Posterior cingulate gyrus (tissue), 11 donors: ENCODE measurements at regions of chr5 and their contacts with region 1.

Region 1: DNA sequence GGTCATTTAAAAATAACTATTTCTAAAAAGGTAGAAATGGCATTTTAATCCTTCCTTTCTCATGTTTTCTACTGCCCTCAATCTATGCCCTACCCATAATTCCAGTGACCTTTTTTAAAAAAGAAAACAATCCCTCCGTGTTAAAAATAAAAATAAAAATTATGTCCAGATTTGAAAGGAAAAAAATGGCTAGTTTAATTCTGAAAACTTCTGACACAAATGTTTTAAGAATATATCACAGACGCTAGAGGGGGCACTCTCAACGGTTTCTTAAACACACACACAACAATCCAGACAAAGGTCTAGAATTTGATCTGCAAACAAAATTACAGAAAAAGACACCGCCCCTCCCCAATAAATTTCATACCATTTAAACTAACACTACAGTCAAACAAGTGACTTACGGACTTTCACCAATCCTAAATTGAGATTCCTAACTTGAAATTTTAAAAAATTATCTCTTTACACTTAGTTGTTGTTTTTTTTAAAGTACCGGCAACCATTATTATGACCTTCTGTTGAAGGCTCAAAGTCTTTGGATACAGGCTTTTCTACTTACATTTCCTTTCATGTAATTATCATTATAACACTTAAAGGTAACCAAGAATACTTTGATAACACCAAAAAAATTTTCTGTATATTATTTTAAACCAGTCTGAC is 38.2 kb downstream of the CLINT1 start:
- DNase-seq: no peak

Region 2: DNA sequence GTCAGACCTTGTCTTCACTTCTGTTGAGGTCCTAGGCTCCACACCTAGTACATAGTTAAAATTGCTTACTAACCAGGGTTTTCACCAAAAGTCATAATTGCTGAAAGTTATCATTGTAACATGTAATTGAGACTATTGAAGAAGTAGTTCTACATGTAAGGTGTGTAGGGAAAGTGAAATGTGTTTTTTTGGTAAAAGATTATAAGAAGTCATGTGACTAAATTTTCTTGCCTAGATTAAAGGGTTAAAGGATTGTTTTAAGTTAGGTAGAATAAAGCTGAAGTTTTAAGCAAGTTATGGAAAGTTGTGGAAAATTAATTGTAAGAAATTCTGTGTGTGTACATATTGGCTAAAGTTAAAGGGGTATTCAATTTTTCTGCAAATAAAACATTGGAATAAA is 123.3 kb before region 1 on chr5:
- intact Hi-C with region 1: no loop called
- DNase-seq: no peak

Region 3: GRCh38 chr5:157761690-157762621 is 58.8 kb before region 1 on chr5:
- intact Hi-C with region 1: no loop called
- DNase-seq: no peak

Region 4: DNA sequence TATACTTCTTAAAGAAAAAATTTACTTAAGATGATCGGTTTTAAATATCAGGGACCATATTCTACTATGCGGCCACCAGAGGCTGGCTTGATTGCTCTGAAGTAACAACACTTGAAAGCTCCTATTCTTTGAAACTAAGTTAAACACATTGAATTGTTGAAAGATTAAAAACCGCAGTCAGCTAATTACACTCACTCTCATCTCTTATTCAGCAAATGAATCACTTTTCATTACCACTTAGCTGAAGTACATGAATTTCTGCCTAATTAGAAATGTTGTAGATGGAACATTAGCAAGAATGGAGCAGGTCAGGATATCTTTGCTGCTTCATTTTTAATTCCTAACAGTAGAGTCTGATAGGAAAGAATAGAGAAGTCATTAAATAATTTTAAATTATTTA is 34.9 kb before region 1 on chr5:
- intact Hi-C with region 1: no loop called
- DNase-seq: no peak

Region 5: GRCh38 chr5:157858527-157859226 is 38.0 kb after region 1 on chr5 and contains the start of gene CLINT1:
- intact Hi-C with region 1: loop called (anchors 5 kb)
- DNase-seq: peak; percentile 89 to 99 (median 93)

Region 6: DNA sequence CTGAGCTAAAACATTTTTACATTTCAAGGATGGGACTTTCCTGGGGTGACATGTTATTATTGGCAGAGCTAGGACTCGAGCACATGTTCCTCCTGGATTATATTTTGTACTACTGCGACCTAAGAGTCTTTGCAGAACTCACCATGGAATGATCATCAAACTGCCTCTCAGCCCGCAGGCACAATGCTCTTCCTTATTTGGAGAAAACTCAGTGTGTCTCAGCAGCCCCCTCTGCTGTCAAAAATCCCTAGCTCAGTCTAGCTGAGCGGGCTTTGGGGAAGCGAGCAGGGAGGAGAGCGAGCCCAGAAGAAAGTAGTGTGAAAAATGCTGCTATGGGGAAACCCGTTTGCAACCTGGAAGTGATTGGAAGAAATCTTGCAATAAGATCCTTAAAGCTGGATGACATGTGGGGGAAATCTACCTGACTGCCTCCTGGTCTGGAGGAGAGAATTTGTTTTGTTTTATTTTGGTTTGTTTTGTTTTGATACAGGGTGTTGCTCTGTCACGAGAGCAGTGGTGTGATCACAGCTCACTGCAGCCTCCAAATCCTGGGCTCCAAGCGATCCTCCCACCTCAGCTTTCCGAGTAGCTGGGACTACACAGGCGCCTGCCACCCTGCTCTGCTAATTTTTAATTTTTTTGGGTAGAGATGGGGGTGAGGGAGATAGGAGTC is 128.2 kb after region 1 on chr5:
- intact Hi-C with region 1: loop called (anchors 2 kb)
- DNase-seq: peak; percentile 68 to 96 (median 83)

Region 7: GRCh38 chr5:157994906-157995519 is 174.3 kb after region 1 on chr5:
- intact Hi-C with region 1: loop called (anchors 2 kb)
- DNase-seq: peak in 6 of 10 donors; percentile 20 to 90 (median 40)

Region 8: GRCh38 chr5:159106569-159107282 is 1286.0 kb after region 1 on chr5:
- intact Hi-C with region 1: loop called (anchors 10 kb)
- DNase-seq: peak in 9 of 10 donors; percentile 53 to 94 (median 76)